HepG2 (cell line): ENCODE measurements at regions of chrX and their contacts with region 1.

Region 1: GRCh38 chrX:18886344-18887161 is 97.4 kb downstream of the PHKA2 start:
- DNase-seq: peak; percentile 22
- ATAC-seq: peak; percentile 52
- H3K4me3 ChIP-seq: peak overlapping the region in 2 of 3 experiments; percentile 39 to 59; a peak in 4 of 6 replicates
- H3K27ac ChIP-seq: no peak overlapping the region
- H3K4me1 ChIP-seq: peaks cover 39% of the 10 kb centered on the region
- H3K27me3 ChIP-seq: no peaks in the 10 kb centered on the region
- CTCF ChIP-seq: peak; percentile 62
- EP300 ChIP-seq: no peak
- POLR2A ChIP-seq: peak in 1 of 2 experiments; percentile 21; a peak in 1 of 4 replicates
- RAD21 ChIP-seq: 0 out of 2 replicates have a peak, but pooled peaks have one; percentile 8

Region 2: GRCh38 chrX:18617407-18617750 is 269.2 kb before region 1 on chrX:
- CTCF ChIA-PET with region 1: no interaction called
- POLR2A ChIA-PET with region 1: no interaction called
- in situ Hi-C with region 1: loop called (anchors 25 kb)
- intact Hi-C with region 1: no loop called
- DNase-seq: peak; percentile 82
- ATAC-seq: peak; percentile 72
- H3K4me3 ChIP-seq: no peak overlapping the region
- H3K27ac ChIP-seq: no peak overlapping the region
- H3K4me1 ChIP-seq: peaks cover 35% of the 10 kb centered on the region
- H3K27me3 ChIP-seq: no peaks in the 10 kb centered on the region
- CTCF ChIP-seq: no peak
- EP300 ChIP-seq: no peak
- POLR2A ChIP-seq: no peak
- RAD21 ChIP-seq: no peak

Region 3: GRCh38 chrX:18873189-18873791 is 13.3 kb before region 1 on chrX:
- CTCF ChIA-PET with region 1: no interaction called
- POLR2A ChIA-PET with region 1: no interaction called
- in situ Hi-C with region 1: no loop called
- intact Hi-C with region 1: no loop called
- DNase-seq: no peak
- ATAC-seq: no peak
- H3K4me3 ChIP-seq: no peak overlapping the region
- H3K27ac ChIP-seq: no peak overlapping the region
- H3K4me1 ChIP-seq: peaks cover 8% of the 10 kb centered on the region
- H3K27me3 ChIP-seq: no peaks in the 10 kb centered on the region
- CTCF ChIP-seq: no peak
- EP300 ChIP-seq: no peak
- POLR2A ChIP-seq: no peak
- RAD21 ChIP-seq: no peak

Region 4: GRCh38 chrX:19094654-19095053 is 208.1 kb after region 1 on chrX:
- CTCF ChIA-PET with region 1: no interaction called
- POLR2A ChIA-PET with region 1: no interaction called
- in situ Hi-C with region 1: no loop called
- intact Hi-C with region 1: no loop called
- DNase-seq: no peak
- ATAC-seq: no peak
- H3K4me3 ChIP-seq: no peak overlapping the region
- H3K27ac ChIP-seq: no peak overlapping the region
- H3K4me1 ChIP-seq: no peaks in the 10 kb centered on the region
- H3K27me3 ChIP-seq: no peaks in the 10 kb centered on the region
- CTCF ChIP-seq: no peak
- EP300 ChIP-seq: no peak
- POLR2A ChIP-seq: no peak
- RAD21 ChIP-seq: no peak